HepG2 (cell line): ENCODE measurements at regions of chr1 and their contacts with region 1.

Region 1: DNA sequence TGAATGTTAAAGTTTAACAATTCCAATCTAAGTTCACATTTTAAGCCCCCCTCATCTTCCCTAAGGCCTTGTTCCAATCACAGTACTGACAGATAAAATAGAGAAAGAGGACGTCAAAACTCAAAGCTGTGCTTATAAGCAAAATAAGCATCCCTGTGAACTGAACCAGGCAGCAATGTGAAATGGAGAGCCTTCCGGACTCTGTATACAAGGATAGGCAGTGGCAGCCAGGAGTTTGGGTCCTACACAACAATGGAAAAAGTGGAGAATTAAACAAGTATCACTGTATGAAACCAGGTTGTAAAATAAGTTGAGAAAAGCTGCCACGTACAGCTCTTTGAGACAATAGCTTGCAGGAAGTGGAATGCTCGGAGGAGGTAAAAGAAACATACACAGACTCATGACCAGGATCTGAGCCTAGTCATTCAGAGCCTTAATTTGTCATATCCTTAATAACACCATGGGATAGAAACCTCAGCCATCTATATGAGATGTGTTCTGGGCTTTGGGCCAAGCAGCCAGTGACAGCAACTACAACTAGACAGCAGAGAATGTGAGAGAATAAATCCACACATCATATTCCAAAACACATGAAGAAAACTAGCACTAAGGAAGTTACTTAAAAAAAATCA is 55.2 kb upstream of the PALMD start:
- DNase-seq: no peak
- ATAC-seq: no peak
- H3K4me3 ChIP-seq: no peak overlapping the region
- H3K27ac ChIP-seq: peak overlapping the region; percentile 82
- H3K4me1 ChIP-seq: peaks cover 51% of the 10 kb centered on the region
- H3K27me3 ChIP-seq: no peaks in the 10 kb centered on the region
- CTCF ChIP-seq: no peak
- EP300 ChIP-seq: no peak
- POLR2A ChIP-seq: no peak
- RAD21 ChIP-seq: no peak

Region 2: DNA sequence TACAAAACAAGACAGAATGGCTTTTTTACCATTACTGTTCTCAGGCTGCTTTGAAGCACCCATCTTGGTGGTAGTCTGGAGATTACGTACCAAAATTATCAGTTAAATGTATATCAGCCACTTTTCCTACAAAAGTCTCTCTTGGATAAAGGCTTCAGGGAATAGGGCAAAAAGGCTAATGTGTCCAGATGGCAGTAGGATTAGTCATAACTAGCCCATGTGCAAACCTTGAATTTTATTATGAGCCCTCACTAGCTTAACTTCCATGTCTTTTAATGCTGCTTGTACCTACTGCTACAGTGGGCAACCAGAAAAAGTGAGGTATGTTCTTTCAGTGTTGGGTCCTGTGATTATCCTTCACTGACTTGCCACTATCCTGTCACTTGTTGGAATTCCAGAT is 275.4 kb before region 1 on chr1:
- CTCF ChIA-PET with region 1: no interaction called
- POLR2A ChIA-PET with region 1: no interaction called
- in situ Hi-C with region 1: no loop called
- intact Hi-C with region 1: no loop called
- DNase-seq: no peak
- ATAC-seq: no peak
- H3K4me3 ChIP-seq: no peak overlapping the region
- H3K27ac ChIP-seq: no peak overlapping the region
- H3K4me1 ChIP-seq: no peaks in the 10 kb centered on the region
- H3K27me3 ChIP-seq: no peaks in the 10 kb centered on the region
- CTCF ChIP-seq: no peak
- EP300 ChIP-seq: no peak
- POLR2A ChIP-seq: no peak
- RAD21 ChIP-seq: no peak

Region 3: GRCh38 chr1:99580451-99580850 is 10.2 kb before region 1 on chr1:
- CTCF ChIA-PET with region 1: no interaction called
- POLR2A ChIA-PET with region 1: interaction called, 13 read pairs
- in situ Hi-C with region 1: no loop called
- intact Hi-C with region 1: no loop called
- DNase-seq: no peak
- ATAC-seq: no peak
- H3K4me3 ChIP-seq: no peak overlapping the region
- H3K27ac ChIP-seq: peak overlapping the region; percentile 46
- H3K4me1 ChIP-seq: peaks cover 51% of the 10 kb centered on the region
- H3K27me3 ChIP-seq: no peaks in the 10 kb centered on the region
- CTCF ChIP-seq: no peak
- EP300 ChIP-seq: no peak
- POLR2A ChIP-seq: no peak
- RAD21 ChIP-seq: no peak